CD8-positive, alpha-beta T cell (primary cell): ENCODE measurements at regions of chr9 and their contacts with region 1.

Region 1: GRCh38 chr9:33076358-33077004 is at the start of gene SMU1:
- DNase-seq: peak; percentile 89 to 98 (median 94)
- ATAC-seq: peak; percentile 94
- H3K4me3 ChIP-seq: peak within 1 kb of the TSS; percentile 69 to 70
- H3K4me3 Mint-ChIP-seq: peak within 1 kb of the TSS; percentile 97
- H3K27ac ChIP-seq: peak within 1 kb of the TSS; percentile 91
- H3K27ac Mint-ChIP-seq: peak within 1 kb of the TSS; percentile 99
- H3K4me1 ChIP-seq: peaks cover 28% of the 10 kb centered on the region
- H3K4me1 Mint-ChIP-seq: peaks cover 34% of the 10 kb centered on the region
- H3K27me3 ChIP-seq: no peaks in the 10 kb centered on the region
- H3K27me3 Mint-ChIP-seq: no peaks in the 10 kb centered on the region
- CTCF ChIP-seq: no peak
- total RNA-seq, gene SMU1: 29.2 to 30.0 TPM

Region 2: DNA sequence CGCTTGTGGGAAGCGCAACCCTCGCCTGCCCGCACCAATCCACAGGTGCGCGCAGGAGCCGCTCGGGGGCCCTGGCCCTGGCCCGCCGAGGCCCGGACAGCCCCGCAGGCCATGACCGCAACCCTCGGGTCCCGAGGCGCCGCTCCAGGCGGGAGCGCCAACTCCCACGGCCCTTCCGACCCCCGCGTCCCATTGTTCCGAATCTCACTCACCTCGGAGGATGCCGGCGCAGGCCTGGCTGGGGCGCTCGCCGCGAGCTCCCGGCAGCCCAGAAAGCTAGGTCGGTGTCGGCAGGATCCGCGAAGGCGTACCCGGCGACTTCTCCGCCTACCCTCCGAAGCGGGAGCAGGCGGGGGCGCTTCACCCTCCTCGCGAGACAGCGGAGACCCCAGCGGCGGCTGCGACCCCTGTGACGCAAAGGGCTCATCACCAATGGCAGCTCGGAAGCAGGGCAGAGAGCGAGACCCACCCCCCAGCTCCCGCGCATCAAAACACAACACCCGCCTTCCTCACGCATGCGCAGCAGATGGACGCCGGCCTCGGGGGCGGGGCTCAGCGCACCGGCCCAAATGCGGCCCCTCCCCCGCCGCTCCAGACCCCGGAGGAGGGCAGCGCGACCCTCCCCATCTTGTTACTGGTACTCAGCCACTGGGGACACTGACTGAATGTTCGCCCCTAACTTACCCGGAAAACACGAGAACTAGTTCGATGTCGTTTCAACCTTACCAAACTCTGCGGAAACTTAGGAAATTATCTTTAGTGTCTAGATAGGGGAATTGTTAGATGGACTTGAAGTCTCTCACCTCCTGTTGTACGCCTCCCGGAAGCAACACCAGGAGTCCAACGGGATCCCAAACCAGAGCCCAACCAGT is 525.7 kb before region 1 on chr9:
- CTCF ChIA-PET with region 1: no interaction called
- POLR2A ChIA-PET with region 1: no interaction called
- intact Hi-C with region 1: loop called in 1 of 2 experiments (anchors 5 kb)
- DNase-seq: peak; percentile 90 to 99 (median 96)
- ATAC-seq: peak; percentile 85
- H3K4me3 ChIP-seq: peak overlapping the region; percentile 85 to 87
- H3K4me3 Mint-ChIP-seq: peak overlapping the region; percentile 94
- H3K27ac ChIP-seq: peak overlapping the region; percentile 91 to 97
- H3K27ac Mint-ChIP-seq: peak overlapping the region; percentile 99
- H3K4me1 ChIP-seq: peaks cover 23% of the 10 kb centered on the region
- H3K4me1 Mint-ChIP-seq: peaks cover 57% of the 10 kb centered on the region
- H3K27me3 ChIP-seq: no peaks in the 10 kb centered on the region
- H3K27me3 Mint-ChIP-seq: no peaks in the 10 kb centered on the region
- CTCF ChIP-seq: peak; percentile 19

Region 3: GRCh38 chr9:33007755-33008154 is 68.7 kb before region 1 on chr9:
- CTCF ChIA-PET with region 1: no interaction called
- POLR2A ChIA-PET with region 1: no interaction called
- intact Hi-C with region 1: loop called in 1 of 2 experiments (anchors 2 kb)
- DNase-seq: no peak
- ATAC-seq: no peak
- H3K4me3 ChIP-seq: no peak overlapping the region
- H3K4me3 Mint-ChIP-seq: no peak overlapping the region
- H3K27ac ChIP-seq: no peak overlapping the region
- H3K27ac Mint-ChIP-seq: no peak overlapping the region
- H3K4me1 ChIP-seq: no peaks in the 10 kb centered on the region
- H3K4me1 Mint-ChIP-seq: no peaks in the 10 kb centered on the region
- H3K27me3 ChIP-seq: no peaks in the 10 kb centered on the region
- H3K27me3 Mint-ChIP-seq: no peaks in the 10 kb centered on the region
- CTCF ChIP-seq: no peak

Region 4: GRCh38 chr9:33139421-33140228 is 63.1 kb after region 1 on chr9:
- CTCF ChIA-PET with region 1: interaction called, 3 read pairs
- POLR2A ChIA-PET with region 1: no interaction called
- intact Hi-C with region 1: loop called in 1 of 2 experiments (anchors 2 kb)
- DNase-seq: peak in 1 of 9 experiments; percentile 45
- ATAC-seq: no peak
- H3K4me3 ChIP-seq: no peak overlapping the region
- H3K4me3 Mint-ChIP-seq: peak overlapping the region; percentile 56
- H3K27ac ChIP-seq: peak overlapping the region in 1 of 2 experiments; percentile 81
- H3K27ac Mint-ChIP-seq: peak overlapping the region; percentile 83
- H3K4me1 ChIP-seq: peaks cover 93% of the 10 kb centered on the region
- H3K4me1 Mint-ChIP-seq: peaks cover 93% of the 10 kb centered on the region
- H3K27me3 ChIP-seq: no peaks in the 10 kb centered on the region
- H3K27me3 Mint-ChIP-seq: no peaks in the 10 kb centered on the region
- CTCF ChIP-seq: no peak

Region 5: DNA sequence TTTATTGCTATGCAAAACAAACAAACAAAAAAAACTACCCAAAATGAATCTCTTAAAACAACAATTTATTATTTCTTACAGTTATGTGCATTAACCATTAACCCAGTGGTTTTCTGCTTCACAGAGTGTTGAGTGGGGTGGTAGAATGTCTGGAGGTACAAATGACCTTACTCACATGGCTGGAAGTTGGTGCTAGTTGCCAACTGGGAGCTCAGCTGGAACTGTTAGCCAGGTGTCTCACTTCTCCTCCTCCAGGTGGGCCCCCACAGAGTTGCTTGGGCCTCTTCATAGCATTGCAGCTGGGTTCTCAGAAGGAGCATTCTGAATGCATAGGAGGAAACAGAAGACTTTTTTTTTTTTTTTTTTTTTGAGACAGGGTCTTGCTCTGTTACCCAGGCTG is 101.2 kb after region 1 on chr9:
- CTCF ChIA-PET with region 1: interaction called, 10 read pairs
- POLR2A ChIA-PET with region 1: no interaction called
- intact Hi-C with region 1: loop called (anchors 1 kb)
- DNase-seq: no peak
- ATAC-seq: no peak
- H3K4me3 ChIP-seq: no peak overlapping the region
- H3K4me3 Mint-ChIP-seq: no peak overlapping the region
- H3K27ac ChIP-seq: no peak overlapping the region
- H3K27ac Mint-ChIP-seq: no peak overlapping the region
- H3K4me1 ChIP-seq: no peaks in the 10 kb centered on the region
- H3K4me1 Mint-ChIP-seq: peaks cover 2% of the 10 kb centered on the region
- H3K27me3 ChIP-seq: no peaks in the 10 kb centered on the region
- H3K27me3 Mint-ChIP-seq: peaks cover 3% of the 10 kb centered on the region
- CTCF ChIP-seq: no peak

Region 6: DNA sequence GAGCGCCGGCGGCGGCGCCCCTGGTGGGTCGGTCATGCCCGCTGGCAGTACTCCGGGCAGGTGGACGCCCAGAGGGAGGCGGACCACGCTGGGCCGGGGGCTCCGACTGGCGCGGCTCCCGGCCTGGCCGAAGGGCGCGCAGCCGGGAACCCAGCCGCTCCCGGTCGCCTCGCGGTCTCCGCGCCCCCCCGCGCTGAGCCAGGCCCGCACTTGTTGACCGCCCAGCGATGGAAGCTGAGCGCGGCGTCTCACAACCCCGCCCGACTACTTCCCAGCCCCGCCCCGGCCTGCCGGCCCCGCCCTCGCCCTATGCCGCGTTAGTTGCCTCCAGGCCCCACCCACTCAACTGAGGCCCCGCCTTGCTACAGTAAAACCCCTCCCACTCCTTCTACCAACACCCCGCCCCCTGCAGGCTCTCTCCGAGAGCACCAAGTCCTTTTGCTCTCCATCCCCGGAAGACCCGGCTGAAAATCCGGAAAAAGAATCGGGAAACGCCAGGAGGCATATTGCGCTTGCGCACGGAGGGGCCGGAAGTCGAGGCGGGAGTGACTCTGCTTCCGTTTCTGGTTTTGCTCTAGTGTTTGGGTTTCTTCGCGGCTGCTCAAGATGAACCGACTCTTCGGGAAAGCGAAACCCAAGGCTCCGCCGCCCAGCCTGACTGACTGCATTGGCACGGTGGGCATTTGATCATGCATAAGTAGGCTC is 188.1 kb after region 1 on chr9 and contains the starts of genes BAG1 and CHMP5:
- CTCF ChIA-PET with region 1: no interaction called
- POLR2A ChIA-PET with region 1: interaction called, 5 read pairs
- intact Hi-C with region 1: loop called (anchors 1 to 2 kb)
- DNase-seq: peak; percentile 99 to 100 (median 100)
- ATAC-seq: peak; percentile 97
- H3K4me3 ChIP-seq: peak within 1 kb of the TSS; percentile 69 to 98
- H3K4me3 Mint-ChIP-seq: peak within 1 kb of the TSS; percentile 96
- H3K27ac ChIP-seq: peak within 1 kb of the TSS; percentile 74 to 94
- H3K27ac Mint-ChIP-seq: peak within 1 kb of the TSS; percentile 97
- H3K4me1 ChIP-seq: peaks cover 21% of the 10 kb centered on the region
- H3K4me1 Mint-ChIP-seq: peaks cover 62% of the 10 kb centered on the region
- H3K27me3 ChIP-seq: no peaks in the 10 kb centered on the region
- H3K27me3 Mint-ChIP-seq: no peaks in the 10 kb centered on the region
- CTCF ChIP-seq: no peak
- total RNA-seq, gene BAG1: 56.8 to 64.3 TPM
- total RNA-seq, gene CHMP5: 13.4 to 14.2 TPM

Region 7: GRCh38 chr9:34048923-34049697 is 972.6 kb after region 1 on chr9:
- CTCF ChIA-PET with region 1: no interaction called
- POLR2A ChIA-PET with region 1: no interaction called
- intact Hi-C with region 1: loop called in 1 of 2 experiments (anchors 5 kb)
- DNase-seq: peak; percentile 92 to 99 (median 97)
- ATAC-seq: peak; percentile 81
- H3K4me3 ChIP-seq: peak overlapping the region; percentile 76 to 79
- H3K4me3 Mint-ChIP-seq: peak overlapping the region; percentile 97
- H3K27ac ChIP-seq: peak overlapping the region; percentile 87 to 95
- H3K27ac Mint-ChIP-seq: peak overlapping the region; percentile 100
- H3K4me1 ChIP-seq: peaks cover 23% of the 10 kb centered on the region
- H3K4me1 Mint-ChIP-seq: peaks cover 29% of the 10 kb centered on the region
- H3K27me3 ChIP-seq: no peaks in the 10 kb centered on the region
- H3K27me3 Mint-ChIP-seq: no peaks in the 10 kb centered on the region
- CTCF ChIP-seq: no peak